K562 (cell line): ENCODE measurements at regions of chr6 and their contacts with region 1.

Region 1: GRCh38 chr6:135044639-135045038 is 10.0 kb downstream of the HBS1L start:
- DNase-seq: no peak
- ATAC-seq: no peak
- H3K4me3 ChIP-seq: no peak overlapping the region
- H3K27ac ChIP-seq: no peak overlapping the region
- H3K4me1 ChIP-seq: peaks cover 0 to 7% of the 10 kb centered on the region in 2 experiments; a peak in 3 of 5 replicates
- H3K27me3 ChIP-seq: no peaks in the 10 kb centered on the region
- CTCF ChIP-seq: no peak
- EP300 ChIP-seq: no peak
- POLR2A ChIP-seq: no peak
- RAD21 ChIP-seq: no peak

Region 2: DNA sequence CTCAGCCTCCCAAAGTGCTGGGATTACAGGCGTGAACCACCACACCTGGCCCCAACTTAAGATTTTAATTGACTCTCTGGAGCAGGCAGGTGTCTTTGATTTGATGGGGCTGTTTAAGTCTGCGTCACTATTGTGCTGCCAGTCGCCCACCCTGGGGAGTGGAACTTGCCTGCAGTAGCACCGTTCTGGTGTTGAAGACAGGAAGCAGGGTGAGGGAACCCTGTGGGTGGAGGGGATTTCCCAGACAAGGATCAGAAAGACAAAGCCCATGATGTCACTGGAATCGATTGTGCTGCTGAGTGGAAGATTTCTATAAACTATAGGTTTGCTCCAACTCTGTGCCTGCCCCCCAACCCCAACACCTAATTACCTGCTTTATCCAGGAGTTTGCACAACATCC is 105.7 kb before region 1 on chr6:
- CTCF ChIA-PET with region 1: no interaction called
- POLR2A ChIA-PET with region 1: no interaction called
- in situ Hi-C with region 1: no loop called
- intact Hi-C with region 1: no loop called
- DNase-seq: no peak
- ATAC-seq: no peak
- H3K4me3 ChIP-seq: no peak overlapping the region
- H3K27ac ChIP-seq: no peak overlapping the region
- H3K4me1 ChIP-seq: no peaks in the 10 kb centered on the region; a peak in 1 of 5 replicates
- H3K27me3 ChIP-seq: peaks cover 0 to 2% of the 10 kb centered on the region in 2 experiments; a peak in 1 of 5 replicates
- CTCF ChIP-seq: no peak
- EP300 ChIP-seq: no peak
- POLR2A ChIP-seq: no peak
- RAD21 ChIP-seq: no peak

Region 3: GRCh38 chr6:135030056-135030473 is 14.6 kb before region 1 on chr6:
- CTCF ChIA-PET with region 1: no interaction called
- POLR2A ChIA-PET with region 1: interaction called, 11 read pairs
- in situ Hi-C with region 1: no loop called
- intact Hi-C with region 1: no loop called
- DNase-seq: no peak
- ATAC-seq: peak; percentile 38
- H3K4me3 ChIP-seq: no peak overlapping the region
- H3K27ac ChIP-seq: peak overlapping the region; percentile 16; the same call in 1 of the 3 replicates
- H3K4me1 ChIP-seq: no peaks in the 10 kb centered on the region
- H3K27me3 ChIP-seq: no peaks in the 10 kb centered on the region
- CTCF ChIP-seq: no peak
- EP300 ChIP-seq: no peak
- POLR2A ChIP-seq: 0 out of 2 replicates have a peak, but pooled peaks have one; percentile 17
- RAD21 ChIP-seq: no peak

Region 4: GRCh38 chr6:135096403-135097135 is 51.9 kb after region 1 on chr6:
- CTCF ChIA-PET with region 1: no interaction called
- POLR2A ChIA-PET with region 1: no interaction called
- in situ Hi-C with region 1: no loop called
- intact Hi-C with region 1: no loop called
- DNase-seq: no peak
- ATAC-seq: no peak
- H3K4me3 ChIP-seq: no peak overlapping the region
- H3K27ac ChIP-seq: peak overlapping the region; percentile 24; the same call in 1 of the 3 replicates
- H3K4me1 ChIP-seq: peaks cover 16 to 41% of the 10 kb centered on the region in 2 experiments
- H3K27me3 ChIP-seq: no peaks in the 10 kb centered on the region
- CTCF ChIP-seq: no peak
- EP300 ChIP-seq: no peak
- POLR2A ChIP-seq: no peak
- RAD21 ChIP-seq: no peak